ENCODE measurements at regions of chr6 and their contacts with region 1.

Region 1: GRCh38 chr6:166786704-166787293 is 159.7 kb upstream of the RPS6KA2 start:
- DNase-seq: no peak

Region 2: GRCh38 chr6:166950443-166950821 is 163.6 kb after region 1 on chr6:
- intact Hi-C with region 1: loop called (anchors 2 kb)
- DNase-seq: no peak

Region 3: DNA sequence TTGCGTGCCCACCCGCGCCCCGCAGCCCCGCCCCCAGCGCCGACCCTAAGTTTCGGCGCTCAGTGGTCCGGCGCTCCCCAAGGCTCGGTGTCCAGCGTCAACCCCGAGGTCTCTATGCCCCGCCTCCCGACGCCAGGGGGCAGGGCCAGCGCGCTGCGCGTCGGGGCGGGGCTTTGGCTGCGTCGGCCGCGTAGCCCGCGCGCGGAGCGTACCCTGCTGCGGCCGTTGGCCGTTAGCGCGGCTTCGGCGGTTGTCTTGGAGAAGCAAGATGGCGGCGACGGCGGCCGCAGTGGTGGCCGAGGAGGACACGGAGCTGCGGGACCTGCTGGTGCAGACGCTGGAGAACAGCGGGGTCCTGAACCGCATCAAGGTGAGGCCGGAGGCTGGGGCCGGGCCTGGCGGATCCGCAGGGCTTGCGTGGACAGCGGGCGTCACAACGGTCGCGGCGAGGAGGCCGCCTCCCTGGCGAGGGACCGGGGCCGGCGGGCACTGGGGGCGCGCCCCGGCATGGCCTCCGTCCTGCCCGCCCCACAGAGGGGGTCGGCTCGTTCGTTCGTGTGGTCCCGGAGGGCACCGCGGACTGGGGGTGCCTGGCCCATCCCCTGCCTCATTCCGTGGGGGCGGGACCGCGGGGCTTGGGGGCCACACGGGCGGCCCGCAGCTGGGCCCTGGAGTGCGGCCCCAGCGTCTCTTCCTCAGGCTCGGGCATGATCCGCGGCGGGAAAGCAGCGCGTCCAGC is 212.5 kb after region 1 on chr6 and contains the start of gene CEP43:
- intact Hi-C with region 1: loop called (anchors 10 kb)
- DNase-seq: peak; percentile 97
- total RNA-seq, gene CEP43: 10.2 TPM

Region 4: GRCh38 chr6:167141667-167142432 is 355.1 kb after region 1 on chr6:
- intact Hi-C with region 1: loop called (anchors 10 kb)
- DNase-seq: no peak